IMR-90 (cell line): ENCODE measurements at regions of chr10 and their contacts with region 1.

Region 1: DNA sequence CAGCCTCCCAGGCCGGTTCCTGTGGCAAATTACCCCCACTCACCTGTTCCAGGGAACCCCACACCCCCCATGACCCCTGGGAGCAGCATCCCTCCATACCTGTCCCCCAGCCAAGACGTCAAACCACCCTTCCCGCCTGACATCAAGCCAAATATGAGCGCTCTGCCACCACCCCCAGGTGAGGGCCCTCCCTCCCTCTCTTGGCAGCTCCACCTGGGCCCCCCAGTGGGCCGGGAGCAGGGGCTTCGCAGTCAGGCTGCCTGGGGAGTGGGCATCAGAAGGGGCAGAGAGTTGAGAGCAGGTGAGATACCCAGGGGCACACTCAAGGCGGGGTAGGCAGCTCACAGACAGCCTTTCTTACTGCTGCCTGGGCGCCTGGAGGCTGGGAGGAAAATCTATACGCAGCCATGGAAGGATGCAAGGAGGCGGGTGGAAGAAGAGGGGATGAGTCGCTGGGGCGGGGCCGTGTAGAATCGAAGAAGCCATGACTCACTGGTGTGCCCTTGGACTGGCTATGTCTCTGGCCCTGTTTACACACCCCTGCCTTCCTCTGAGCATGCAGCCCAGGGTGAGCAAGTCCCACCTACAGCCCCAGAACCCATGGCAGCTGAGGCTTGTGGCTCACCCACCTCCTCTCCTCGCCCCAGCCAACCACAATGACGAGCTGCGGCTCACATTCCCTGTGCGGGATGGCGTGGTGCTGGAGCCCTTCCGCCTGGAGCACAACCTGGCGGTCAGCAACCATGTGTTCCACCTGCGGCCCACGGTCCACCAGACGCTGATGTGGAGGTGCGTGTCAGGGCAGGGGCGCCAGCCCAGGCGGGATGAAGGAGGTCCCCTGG is 48.6 kb upstream of the PPIF start:
- DNase-seq: peak; percentile 99
- ATAC-seq: peak; percentile 87
- H3K4me3 ChIP-seq: no peak overlapping the region
- H3K27ac ChIP-seq: peak overlapping the region; percentile 55
- H3K4me1 ChIP-seq: peaks cover 22% of the 10 kb centered on the region
- H3K27me3 ChIP-seq: no peaks in the 10 kb centered on the region
- CTCF ChIP-seq: no peak
- POLR2A ChIP-seq: no peak
- RAD21 ChIP-seq: peak; percentile 20; the same call in 1 of the 2 replicates

Region 2: GRCh38 chr10:78846760-78847159 is 451.9 kb before region 1 on chr10:
- CTCF ChIA-PET with region 1: no interaction called
- POLR2A ChIA-PET with region 1: no interaction called
- dilution Hi-C with region 1: no loop called
- in situ Hi-C with region 1: no loop called
- intact Hi-C with region 1: no loop called
- DNase-seq: no peak
- ATAC-seq: no peak
- H3K4me3 ChIP-seq: no peak overlapping the region
- H3K27ac ChIP-seq: no peak overlapping the region
- H3K4me1 ChIP-seq: peaks cover under 1% of the 10 kb centered on the region; the same call in 1 of the 2 replicates
- H3K27me3 ChIP-seq: peaks cover 46% of the 10 kb centered on the region
- CTCF ChIP-seq: no peak
- POLR2A ChIP-seq: no peak
- RAD21 ChIP-seq: no peak

Region 3: GRCh38 chr10:79260786-79261740 is 37.6 kb before region 1 on chr10:
- CTCF ChIA-PET with region 1: no interaction called
- POLR2A ChIA-PET with region 1: no interaction called
- dilution Hi-C with region 1: no loop called
- in situ Hi-C with region 1: no loop called
- intact Hi-C with region 1: loop called (anchors 2 kb)
- DNase-seq: peak; percentile 80
- ATAC-seq: peak; percentile 89
- H3K4me3 ChIP-seq: no peak overlapping the region
- H3K27ac ChIP-seq: peak overlapping the region; percentile 60
- H3K4me1 ChIP-seq: peaks cover 35% of the 10 kb centered on the region
- H3K27me3 ChIP-seq: no peaks in the 10 kb centered on the region
- CTCF ChIP-seq: no peak
- POLR2A ChIP-seq: no peak
- RAD21 ChIP-seq: no peak

Region 4: GRCh38 chr10:79320785-79321493 is 22.3 kb after region 1 on chr10:
- CTCF ChIA-PET with region 1: no interaction called
- POLR2A ChIA-PET with region 1: no interaction called
- dilution Hi-C with region 1: no loop called
- in situ Hi-C with region 1: no loop called
- intact Hi-C with region 1: loop called (anchors 1 kb)
- DNase-seq: peak; percentile 94
- ATAC-seq: peak; percentile 8
- H3K4me3 ChIP-seq: no peak overlapping the region
- H3K27ac ChIP-seq: peak overlapping the region; percentile 9; the same call in 1 of the 2 replicates
- H3K4me1 ChIP-seq: peaks cover 37% of the 10 kb centered on the region
- H3K27me3 ChIP-seq: no peaks in the 10 kb centered on the region
- CTCF ChIP-seq: no peak
- POLR2A ChIP-seq: no peak
- RAD21 ChIP-seq: no peak

Region 5: DNA sequence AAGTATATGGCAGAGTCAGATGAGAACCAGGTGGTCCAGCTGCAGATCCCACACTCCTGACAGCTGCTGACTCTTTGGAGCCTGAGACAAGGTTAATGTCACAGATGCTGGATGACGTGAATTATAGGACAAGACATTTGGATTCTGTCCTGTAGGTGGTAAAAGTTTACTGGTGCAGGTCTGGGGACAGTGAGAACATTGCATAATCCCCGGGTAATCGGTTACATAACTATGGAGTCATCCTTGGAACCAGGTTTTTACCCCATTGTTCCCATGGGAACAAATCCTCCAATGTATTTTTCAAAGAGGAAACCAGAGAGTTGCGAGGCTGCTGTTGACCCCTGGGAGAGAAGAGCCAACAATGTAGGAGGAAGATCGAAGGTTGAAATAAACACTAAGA is 174.3 kb after region 1 on chr10:
- CTCF ChIA-PET with region 1: no interaction called
- POLR2A ChIA-PET with region 1: no interaction called
- dilution Hi-C with region 1: no loop called
- in situ Hi-C with region 1: no loop called
- intact Hi-C with region 1: no loop called
- DNase-seq: no peak
- ATAC-seq: no peak
- H3K4me3 ChIP-seq: no peak overlapping the region
- H3K27ac ChIP-seq: no peak overlapping the region
- H3K4me1 ChIP-seq: peaks cover 6% of the 10 kb centered on the region; the same call in 1 of the 2 replicates
- H3K27me3 ChIP-seq: peaks cover 1% of the 10 kb centered on the region; the same call in 1 of the 2 replicates
- CTCF ChIP-seq: no peak
- POLR2A ChIP-seq: no peak
- RAD21 ChIP-seq: no peak